ENCODE measurements at regions of chr1 and their contacts with region 1.

Region 1: DNA sequence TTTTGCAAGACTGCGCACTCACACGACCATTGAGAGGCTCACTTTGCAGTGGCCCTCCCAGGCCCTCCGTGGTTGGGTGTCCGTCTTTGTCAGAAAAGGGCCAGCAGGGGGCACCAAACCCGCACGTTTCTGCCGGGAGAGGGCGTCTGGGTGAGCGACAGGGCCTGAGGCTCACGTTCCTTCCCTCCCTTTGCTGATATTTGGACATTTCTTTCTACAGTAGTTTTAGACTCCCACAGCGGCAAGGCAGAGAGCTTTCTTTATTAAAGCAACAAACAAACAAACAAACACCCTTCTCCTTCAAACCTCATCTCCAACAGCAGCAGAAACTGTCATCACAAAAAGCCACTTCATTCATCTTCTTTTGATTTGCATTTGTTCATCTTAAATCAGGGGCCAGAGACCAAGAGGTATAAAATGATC is 79.2 kb upstream of the WDR26 start:
- DNase-seq: peak; percentile 89
- H3K4me3 Mint-ChIP-seq: no peak overlapping the region
- H3K27ac Mint-ChIP-seq: no peak overlapping the region
- H3K4me1 Mint-ChIP-seq: peaks cover 27% of the 10 kb centered on the region
- H3K27me3 Mint-ChIP-seq: no peaks in the 10 kb centered on the region

Region 2: DNA sequence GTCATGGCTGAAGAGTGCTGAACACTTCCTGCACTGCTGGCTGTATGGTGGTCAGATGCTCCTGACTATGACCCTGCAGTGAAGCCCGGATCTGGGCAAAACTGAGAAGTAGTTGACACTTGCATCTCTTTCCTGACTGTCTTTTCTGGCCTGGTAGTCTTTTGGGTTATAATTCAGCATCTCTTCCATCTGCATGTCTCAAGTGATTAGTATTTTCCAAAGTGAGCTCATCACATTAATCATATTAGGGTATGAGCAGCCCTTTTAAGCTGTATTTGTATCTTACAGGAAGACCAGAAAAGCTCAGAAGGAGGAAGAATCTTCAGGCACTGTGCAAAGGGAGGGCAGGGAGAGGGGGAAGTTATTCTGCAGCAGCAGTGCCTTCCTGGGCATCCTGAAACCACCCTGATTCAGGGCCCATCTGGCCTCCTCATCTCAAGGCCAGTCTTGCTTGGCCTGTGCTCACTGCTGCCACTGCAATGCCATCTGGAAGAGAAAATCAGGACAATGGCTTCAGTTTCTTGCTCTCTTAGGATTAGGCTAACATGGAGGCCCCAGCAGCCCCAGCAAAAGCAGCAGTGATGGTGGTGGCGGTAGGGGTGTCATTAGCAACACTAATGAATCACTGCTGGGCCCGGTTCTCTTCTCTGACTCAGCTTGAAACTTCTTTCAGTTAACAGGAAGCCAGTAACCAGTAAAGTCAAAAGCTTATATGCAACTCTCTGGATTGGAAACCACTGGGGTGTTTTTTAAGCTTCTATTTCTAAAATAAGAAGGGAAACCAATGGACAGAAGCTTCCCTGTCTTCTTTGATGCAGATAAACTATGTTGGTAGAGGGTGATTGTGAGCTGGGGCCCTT is 15.9 kb before region 1 on chr1:
- CTCF ChIA-PET with region 1: interaction called, 37 read pairs
- POLR2A ChIA-PET with region 1: interaction called, 20 read pairs
- DNase-seq: peak; percentile 86
- H3K4me3 Mint-ChIP-seq: peak overlapping the region; percentile 52
- H3K27ac Mint-ChIP-seq: peak overlapping the region; percentile 95
- H3K4me1 Mint-ChIP-seq: peaks cover 63% of the 10 kb centered on the region
- H3K27me3 Mint-ChIP-seq: no peaks in the 10 kb centered on the region

Region 3: DNA sequence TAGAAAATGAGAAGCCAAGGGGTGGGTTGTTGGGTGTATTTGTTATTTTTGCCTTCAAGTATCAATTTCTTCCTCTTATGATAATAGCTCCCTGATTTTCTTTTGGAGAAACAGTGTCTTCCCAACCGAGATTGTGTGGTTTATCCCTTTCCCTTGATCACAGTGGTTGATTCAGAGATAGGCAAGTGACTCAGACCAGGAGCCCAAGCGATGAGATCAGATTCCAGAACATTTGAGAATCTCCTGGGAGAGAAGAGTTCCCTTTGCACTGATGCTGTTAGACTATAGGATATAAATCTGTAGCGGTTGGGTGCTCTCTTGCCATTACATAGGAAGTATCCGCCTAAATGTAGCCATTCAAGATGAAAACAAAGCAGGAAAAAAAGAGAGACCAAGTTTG is 10.9 kb after region 1 on chr1:
- CTCF ChIA-PET with region 1: interaction called, 14 read pairs
- POLR2A ChIA-PET with region 1: no interaction called
- DNase-seq: no peak
- H3K4me3 Mint-ChIP-seq: no peak overlapping the region
- H3K27ac Mint-ChIP-seq: no peak overlapping the region
- H3K4me1 Mint-ChIP-seq: no peaks in the 10 kb centered on the region
- H3K27me3 Mint-ChIP-seq: no peaks in the 10 kb centered on the region

Region 4: GRCh38 chr1:224623743-224624333 is 110.0 kb after region 1 on chr1:
- CTCF ChIA-PET with region 1: interaction called, 24 read pairs
- POLR2A ChIA-PET with region 1: interaction called, 4 read pairs
- DNase-seq: peak; percentile 94
- H3K4me3 Mint-ChIP-seq: peak overlapping the region; percentile 65
- H3K27ac Mint-ChIP-seq: peak overlapping the region; percentile 98
- H3K4me1 Mint-ChIP-seq: peaks cover 49% of the 10 kb centered on the region
- H3K27me3 Mint-ChIP-seq: peaks cover 21% of the 10 kb centered on the region

Region 5: GRCh38 chr1:224851210-224851847 is 337.5 kb after region 1 on chr1:
- CTCF ChIA-PET with region 1: interaction called, 112 read pairs
- POLR2A ChIA-PET with region 1: interaction called, 3 read pairs
- DNase-seq: peak; percentile 63
- H3K4me3 Mint-ChIP-seq: no peak overlapping the region
- H3K27ac Mint-ChIP-seq: no peak overlapping the region
- H3K4me1 Mint-ChIP-seq: no peaks in the 10 kb centered on the region
- H3K27me3 Mint-ChIP-seq: peaks cover 8% of the 10 kb centered on the region

Measured in activated CD4-positive, alpha-beta memory T cell treated with anti-CD3 and anti-CD28 coated beads, Interleukin-2, amount 10 ng/mL, durations not matched to agents 7 days and 5 days (primary cell).